SK-N-SH (cell line): ENCODE measurements at regions of chr15 and their contacts with region 1.

Region 1: GRCh38 chr15:101014921-101015841 is 96.0 kb downstream of the LRRK1 start:
- DNase-seq: peak; percentile 91
- H3K4me3 ChIP-seq: no peak overlapping the region
- H3K27ac ChIP-seq: no peak overlapping the region
- H3K4me1 ChIP-seq: peaks cover 0 to 7% of the 10 kb centered on the region in 2 experiments; a peak in 1 of 4 replicates
- H3K27me3 ChIP-seq: no peaks in the 10 kb centered on the region
- CTCF ChIP-seq: peak; percentile 93
- EP300 ChIP-seq: no peak
- RAD21 ChIP-seq: peak; percentile 96

Region 2: DNA sequence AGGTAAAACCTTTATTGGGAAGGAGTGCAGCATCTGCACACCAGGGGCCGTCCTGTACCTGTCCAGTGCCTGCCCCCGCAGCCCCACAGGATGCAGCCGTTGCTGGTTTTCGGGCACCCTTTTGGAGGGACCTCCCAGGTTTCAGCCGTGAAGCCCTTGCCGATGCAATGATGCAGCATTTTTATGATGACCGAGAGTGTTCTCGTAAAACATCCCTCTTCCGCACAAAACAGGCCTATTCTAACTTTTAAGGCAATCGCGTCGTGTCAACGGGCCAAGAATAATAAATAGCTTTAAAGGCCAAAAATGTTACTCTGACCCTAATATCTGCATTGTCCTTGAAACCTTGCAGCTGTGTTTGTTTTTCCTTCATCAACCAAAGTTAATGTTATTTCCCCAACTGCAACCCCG is 30.1 kb after region 1 on chr15:
- CTCF ChIA-PET with region 1: no interaction called
- POLR2A ChIA-PET with region 1: no interaction called
- DNase-seq: no peak
- H3K4me3 ChIP-seq: no peak overlapping the region
- H3K27ac ChIP-seq: no peak overlapping the region
- H3K4me1 ChIP-seq: no peaks in the 10 kb centered on the region; a peak in 1 of 4 replicates
- H3K27me3 ChIP-seq: no peaks in the 10 kb centered on the region
- CTCF ChIP-seq: no peak
- EP300 ChIP-seq: no peak
- RAD21 ChIP-seq: no peak

Region 3: GRCh38 chr15:101063891-101064794 is 49.0 kb after region 1 on chr15:
- CTCF ChIA-PET with region 1: interaction called, 11 read pairs
- POLR2A ChIA-PET with region 1: no interaction called
- DNase-seq: peak; percentile 54
- H3K4me3 ChIP-seq: no peak overlapping the region
- H3K27ac ChIP-seq: peak overlapping the region in 1 of 2 experiments; percentile 6; a peak in 1 of 4 replicates
- H3K4me1 ChIP-seq: peaks cover 0 to 19% of the 10 kb centered on the region in 2 experiments; a peak in 1 of 4 replicates
- H3K27me3 ChIP-seq: no peaks in the 10 kb centered on the region
- CTCF ChIP-seq: no peak
- EP300 ChIP-seq: no peak
- RAD21 ChIP-seq: no peak

Region 4: DNA sequence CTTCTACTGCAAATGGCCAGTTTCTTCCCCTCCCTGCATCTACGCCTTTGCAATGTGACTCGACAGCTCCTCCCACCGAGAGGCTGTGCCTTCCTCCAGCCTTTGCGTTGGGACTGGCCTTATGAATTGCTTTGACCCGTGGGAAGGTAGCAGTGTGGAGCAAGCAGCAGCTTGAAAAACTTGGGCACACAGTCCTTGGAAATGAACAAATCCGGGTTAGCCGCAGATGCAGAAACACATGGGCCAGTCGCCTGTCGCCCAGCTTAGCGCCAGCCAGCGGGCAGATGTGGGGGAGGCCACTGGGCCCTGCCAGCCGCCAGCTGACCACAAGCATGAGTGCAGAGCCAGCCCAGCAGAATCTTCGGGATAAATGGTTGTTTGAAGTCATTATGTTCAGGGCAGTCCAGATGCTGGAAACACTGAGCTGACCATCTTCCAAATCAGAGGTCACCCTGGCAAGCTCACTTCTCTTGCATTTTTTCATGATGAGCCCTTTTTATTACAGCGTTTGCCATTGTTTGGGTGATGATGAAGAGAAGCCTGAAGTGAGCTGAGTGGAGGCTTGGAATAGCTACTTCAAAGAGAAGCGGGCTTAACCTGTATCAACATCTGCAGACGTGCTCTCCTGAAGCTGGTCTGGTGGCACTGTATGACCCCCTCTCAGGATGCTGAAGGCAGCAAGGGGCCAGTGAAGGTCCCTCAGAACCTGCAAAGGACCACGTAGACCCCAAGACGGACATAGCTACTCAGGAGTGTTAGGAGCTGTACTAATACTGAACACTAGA is 252.3 kb after region 1 on chr15:
- CTCF ChIA-PET with region 1: interaction called, 14 read pairs
- POLR2A ChIA-PET with region 1: no interaction called
- DNase-seq: no peak
- H3K4me3 ChIP-seq: no peak overlapping the region
- H3K27ac ChIP-seq: no peak overlapping the region; a peak in 2 of 4 replicates
- H3K4me1 ChIP-seq: peaks cover 0 to 11% of the 10 kb centered on the region in 2 experiments; a peak in 1 of 4 replicates
- H3K27me3 ChIP-seq: no peaks in the 10 kb centered on the region
- CTCF ChIP-seq: no peak
- EP300 ChIP-seq: no peak
- RAD21 ChIP-seq: no peak